ENCODE measurements at regions of chr11 and their contacts with region 1.

Region 1: GRCh38 chr11:63838678-63839507 is at the start of gene MARK2:
- DNase-seq: peak; percentile 97
- H3K4me3 Mint-ChIP-seq: peak within 1 kb of the TSS; percentile 93
- H3K27ac Mint-ChIP-seq: peak within 1 kb of the TSS; percentile 73
- H3K4me1 Mint-ChIP-seq: peaks cover 40% of the 10 kb centered on the region
- H3K27me3 Mint-ChIP-seq: no peaks in the 10 kb centered on the region
- CTCF ChIP-seq: no peak
- total RNA-seq, gene MARK2: 36.9 and 39.8 TPM in 2 replicates

Region 2: DNA sequence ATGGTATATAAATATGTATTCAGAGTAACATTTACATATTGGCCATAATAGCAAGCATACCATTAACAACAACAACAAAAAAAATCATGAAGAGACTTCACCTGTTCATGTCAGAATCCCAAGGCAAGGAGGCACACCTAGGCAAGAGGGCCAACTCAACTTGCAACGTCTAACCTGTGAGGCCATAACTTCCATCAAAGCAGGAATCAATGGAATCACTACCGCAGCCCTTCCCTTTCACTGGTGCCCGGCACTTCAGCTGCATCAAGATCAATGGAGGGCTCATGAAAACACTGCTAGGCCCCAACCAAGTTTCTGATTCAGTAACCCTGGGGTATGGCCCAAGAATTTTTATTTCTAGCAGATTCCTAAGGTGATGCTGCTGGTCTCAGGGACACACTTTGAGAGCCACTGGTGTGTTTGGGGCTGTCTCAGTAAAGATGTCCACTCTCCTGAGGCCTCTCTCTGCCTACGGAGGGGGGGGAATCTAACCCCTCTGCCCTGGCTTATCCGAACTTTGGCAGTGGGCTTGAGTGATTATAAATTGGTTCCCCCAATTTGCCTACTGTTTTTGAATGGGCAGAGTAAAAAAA is 78.3 kb before region 1 on chr11:
- CTCF ChIA-PET with region 1: no interaction called
- POLR2A ChIA-PET with region 1: no interaction called
- intact Hi-C with region 1: no loop called
- DNase-seq: no peak
- H3K4me3 Mint-ChIP-seq: no peak overlapping the region
- H3K27ac Mint-ChIP-seq: no peak overlapping the region
- H3K4me1 Mint-ChIP-seq: peaks cover 4% of the 10 kb centered on the region
- H3K27me3 Mint-ChIP-seq: no peaks in the 10 kb centered on the region
- CTCF ChIP-seq: no peak

Region 3: DNA sequence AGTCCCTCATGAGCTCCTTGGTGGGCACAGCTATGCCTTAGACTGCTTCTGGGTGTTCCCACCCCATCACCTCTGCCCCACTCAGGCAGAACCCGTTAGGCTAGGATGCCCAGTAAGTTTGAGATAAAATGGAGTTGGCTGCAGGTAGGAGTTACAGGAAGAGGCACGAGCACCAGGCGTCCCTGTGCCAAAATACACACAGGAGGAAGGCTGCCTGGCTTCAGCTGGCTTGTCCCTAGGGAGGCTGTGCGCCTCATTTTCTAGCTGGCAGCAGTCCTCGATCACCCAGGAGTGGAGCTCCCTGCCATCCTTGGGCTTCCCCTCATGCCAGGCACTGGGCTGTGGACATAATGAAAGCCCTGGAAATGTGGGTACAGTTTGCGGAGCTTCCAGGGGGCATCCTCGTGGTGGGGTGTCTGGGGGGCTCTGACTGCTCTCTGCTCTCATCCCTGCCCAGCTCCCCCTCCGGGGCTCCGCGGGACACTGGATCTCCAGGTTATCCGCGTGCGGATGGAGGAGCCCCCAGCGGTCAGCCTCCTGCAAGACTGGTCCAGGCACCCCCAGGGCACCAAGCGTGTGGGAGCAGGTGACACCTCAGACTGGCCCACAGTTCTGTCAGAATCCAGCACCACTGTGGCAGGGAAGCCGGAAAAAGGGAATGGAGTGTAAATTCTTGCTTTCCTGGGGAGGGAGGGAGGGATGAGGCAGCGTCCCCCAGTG is 12.3 kb before region 1 on chr11:
- CTCF ChIA-PET with region 1: interaction called, 15 read pairs
- POLR2A ChIA-PET with region 1: interaction called, 3 read pairs
- intact Hi-C with region 1: no loop called
- DNase-seq: no peak
- H3K4me3 Mint-ChIP-seq: no peak overlapping the region
- H3K27ac Mint-ChIP-seq: no peak overlapping the region
- H3K4me1 Mint-ChIP-seq: no peaks in the 10 kb centered on the region
- H3K27me3 Mint-ChIP-seq: no peaks in the 10 kb centered on the region
- CTCF ChIP-seq: no peak

Region 4: DNA sequence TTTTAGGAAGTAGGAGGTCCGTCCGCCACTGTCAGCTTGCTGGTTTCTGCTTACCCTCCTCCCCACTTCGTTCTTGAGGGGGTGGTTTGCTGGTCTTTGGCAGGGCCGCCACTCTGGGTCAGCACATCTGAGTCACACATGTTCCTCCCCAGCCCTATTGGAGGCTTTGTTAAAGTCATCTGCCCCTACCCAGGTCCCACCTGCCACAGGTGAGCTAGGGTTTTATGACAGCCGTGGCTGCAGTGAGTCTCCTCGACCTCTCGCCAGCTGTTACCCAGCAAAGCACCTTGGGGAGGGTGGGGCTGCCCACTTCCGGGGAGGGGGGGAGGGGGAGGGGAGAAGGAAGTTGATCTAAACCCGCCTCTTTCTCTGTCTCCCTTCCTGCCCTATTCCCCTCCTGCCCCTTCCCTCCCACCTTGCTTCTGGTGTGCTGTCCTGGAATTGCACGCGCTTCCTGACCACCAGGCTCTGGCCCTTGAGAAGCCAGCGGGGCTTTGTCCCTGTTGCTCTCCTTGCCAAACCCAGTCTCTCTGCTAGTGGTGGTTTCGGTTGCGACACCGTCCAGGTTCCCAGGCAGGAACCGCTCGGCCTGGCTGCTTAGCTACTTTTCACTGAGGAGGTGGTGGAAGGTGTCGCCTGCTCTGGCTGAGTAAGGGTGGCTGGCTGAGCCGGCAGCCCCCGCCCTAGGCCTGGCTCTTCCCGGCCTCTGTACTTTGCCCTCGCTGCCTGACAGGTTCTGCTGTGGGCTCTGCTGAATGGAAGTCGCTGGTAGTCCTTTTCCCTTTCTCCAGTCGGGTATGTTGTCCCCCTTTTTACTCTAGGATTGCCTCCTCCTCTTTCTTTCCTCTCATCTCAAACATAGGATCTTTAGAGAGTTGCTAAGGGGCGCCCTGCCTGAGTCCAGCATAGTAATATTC is 49.5 kb after region 1 on chr11:
- CTCF ChIA-PET with region 1: interaction called, 24 read pairs
- POLR2A ChIA-PET with region 1: interaction called, 39 read pairs
- intact Hi-C with region 1: loop called (anchors 5 kb)
- DNase-seq: peak; percentile 91
- H3K4me3 Mint-ChIP-seq: peak overlapping the region; percentile 74
- H3K27ac Mint-ChIP-seq: peak overlapping the region; percentile 80
- H3K4me1 Mint-ChIP-seq: peaks cover 42% of the 10 kb centered on the region
- H3K27me3 Mint-ChIP-seq: no peaks in the 10 kb centered on the region
- CTCF ChIP-seq: no peak

Region 5: GRCh38 chr11:63945477-63946163 is 106.7 kb after region 1 on chr11:
- CTCF ChIA-PET with region 1: interaction called, 241 read pairs
- POLR2A ChIA-PET with region 1: interaction called, 37 read pairs
- intact Hi-C with region 1: loop called (anchors 1 kb)
- DNase-seq: peak; percentile 75
- H3K4me3 Mint-ChIP-seq: no peak overlapping the region
- H3K27ac Mint-ChIP-seq: no peak overlapping the region
- H3K4me1 Mint-ChIP-seq: no peaks in the 10 kb centered on the region
- H3K27me3 Mint-ChIP-seq: no peaks in the 10 kb centered on the region
- CTCF ChIP-seq: peak; percentile 63

Region 6: GRCh38 chr11:63974259-63975143 is 135.6 kb after region 1 on chr11 and contains the start of gene COX8A:
- CTCF ChIA-PET with region 1: interaction called, 4 read pairs
- POLR2A ChIA-PET with region 1: interaction called, 12 read pairs
- intact Hi-C with region 1: no loop called
- DNase-seq: peak; percentile 100
- H3K4me3 Mint-ChIP-seq: peak within 1 kb of the TSS; percentile 99
- H3K27ac Mint-ChIP-seq: peak within 1 kb of the TSS; percentile 99
- H3K4me1 Mint-ChIP-seq: peaks cover 6% of the 10 kb centered on the region
- H3K27me3 Mint-ChIP-seq: no peaks in the 10 kb centered on the region
- CTCF ChIP-seq: no peak
- total RNA-seq, gene COX8A: 461 and 466 TPM in 2 replicates